ENCODE measurements at regions of chr1 and their contacts with region 1.

Region 1: GRCh38 chr1:223748773-223749733 is 36.7 kb downstream of the CAPN2 start:
- DNase-seq: peak; percentile 46 to 83 (median 66)
- ATAC-seq: peak; percentile 91
- H3K4me3 ChIP-seq: peak overlapping the region; percentile 55 to 58
- H3K4me3 Mint-ChIP-seq: peak overlapping the region; percentile 86
- H3K27ac ChIP-seq: peak overlapping the region in 1 of 2 experiments; percentile 36
- H3K27ac Mint-ChIP-seq: no peak overlapping the region
- H3K4me1 ChIP-seq: peaks cover 4% of the 10 kb centered on the region
- H3K4me1 Mint-ChIP-seq: no peaks in the 10 kb centered on the region
- H3K27me3 ChIP-seq: no peaks in the 10 kb centered on the region
- H3K27me3 Mint-ChIP-seq: no peaks in the 10 kb centered on the region
- CTCF ChIP-seq: peak; percentile 88

Region 2: GRCh38 chr1:223700942-223701637 is 48.0 kb before region 1 on chr1:
- CTCF ChIA-PET with region 1: interaction called, 135 read pairs
- POLR2A ChIA-PET with region 1: interaction called, 3 read pairs
- intact Hi-C with region 1: loop called (anchors 1 kb)
- DNase-seq: no peak
- ATAC-seq: no peak
- H3K4me3 ChIP-seq: no peak overlapping the region
- H3K4me3 Mint-ChIP-seq: no peak overlapping the region
- H3K27ac ChIP-seq: no peak overlapping the region
- H3K27ac Mint-ChIP-seq: no peak overlapping the region
- H3K4me1 ChIP-seq: peaks cover 7% of the 10 kb centered on the region
- H3K4me1 Mint-ChIP-seq: peaks cover 6% of the 10 kb centered on the region
- H3K27me3 ChIP-seq: no peaks in the 10 kb centered on the region
- H3K27me3 Mint-ChIP-seq: no peaks in the 10 kb centered on the region
- CTCF ChIP-seq: no peak

Region 3: DNA sequence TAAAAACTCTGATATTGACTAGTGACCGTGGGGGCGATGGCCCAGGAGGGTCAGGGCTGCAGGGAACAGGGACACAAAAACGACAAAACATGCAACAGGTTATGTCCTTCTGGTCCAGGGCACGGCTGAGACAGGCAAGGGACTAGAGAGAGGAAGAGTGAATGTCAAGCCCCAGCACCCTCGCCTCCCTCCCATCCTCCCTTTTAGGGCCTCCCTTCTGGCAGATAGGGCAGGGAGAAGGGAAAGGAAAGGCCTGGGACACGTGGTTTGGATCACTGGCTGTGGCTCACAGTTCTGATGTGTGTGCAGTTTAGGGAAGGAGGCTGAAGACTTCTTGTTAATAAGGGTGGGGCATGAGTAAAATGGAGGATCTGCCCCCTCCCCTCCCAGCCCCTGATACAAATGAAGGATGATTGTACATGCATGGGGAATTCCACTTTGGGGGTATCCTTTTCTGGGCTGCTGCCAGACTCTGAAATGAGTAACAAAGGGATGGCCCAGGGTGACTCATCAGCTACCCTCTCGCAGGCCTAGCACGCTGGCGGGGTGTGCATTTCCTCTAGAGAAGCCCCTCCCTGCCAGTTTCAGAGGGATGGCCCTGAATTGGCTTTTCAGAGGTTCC is 22.6 kb before region 1 on chr1:
- CTCF ChIA-PET with region 1: interaction called, 89 read pairs
- POLR2A ChIA-PET with region 1: interaction called, 3 read pairs
- intact Hi-C with region 1: loop called in 1 of 2 experiments (anchors 1 kb)
- DNase-seq: peak; percentile 59 to 96 (median 85)
- ATAC-seq: peak; percentile 95
- H3K4me3 ChIP-seq: no peak overlapping the region
- H3K4me3 Mint-ChIP-seq: peak overlapping the region; percentile 70
- H3K27ac ChIP-seq: peak overlapping the region; percentile 21 to 92
- H3K27ac Mint-ChIP-seq: peak overlapping the region; percentile 88
- H3K4me1 ChIP-seq: peaks cover 35% of the 10 kb centered on the region
- H3K4me1 Mint-ChIP-seq: peaks cover 58% of the 10 kb centered on the region
- H3K27me3 ChIP-seq: no peaks in the 10 kb centered on the region
- H3K27me3 Mint-ChIP-seq: no peaks in the 10 kb centered on the region
- CTCF ChIP-seq: no peak

Region 4: DNA sequence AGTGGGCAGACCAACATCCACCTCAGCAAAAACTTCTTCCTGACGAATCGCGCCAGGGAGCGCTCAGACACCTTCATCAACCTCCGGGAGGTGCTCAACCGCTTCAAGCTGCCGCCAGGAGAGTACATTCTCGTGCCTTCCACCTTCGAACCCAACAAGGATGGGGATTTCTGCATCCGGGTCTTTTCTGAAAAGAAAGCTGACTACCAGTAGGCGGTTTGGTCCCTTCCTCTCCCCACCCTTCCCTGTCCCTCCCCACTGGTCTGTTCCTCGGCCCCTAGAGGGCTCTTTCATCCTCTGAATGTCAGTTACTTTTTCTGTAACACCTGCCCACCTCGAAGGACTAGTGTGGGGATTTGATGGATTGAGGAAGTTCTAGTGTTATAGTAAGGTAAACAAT is 10.2 kb after region 1 on chr1:
- CTCF ChIA-PET with region 1: interaction called, 17 read pairs
- POLR2A ChIA-PET with region 1: interaction called, 3 read pairs
- intact Hi-C with region 1: no loop called
- DNase-seq: no peak
- ATAC-seq: no peak
- H3K4me3 ChIP-seq: no peak overlapping the region
- H3K4me3 Mint-ChIP-seq: no peak overlapping the region
- H3K27ac ChIP-seq: no peak overlapping the region
- H3K27ac Mint-ChIP-seq: no peak overlapping the region
- H3K4me1 ChIP-seq: no peaks in the 10 kb centered on the region
- H3K4me1 Mint-ChIP-seq: no peaks in the 10 kb centered on the region
- H3K27me3 ChIP-seq: no peaks in the 10 kb centered on the region
- H3K27me3 Mint-ChIP-seq: no peaks in the 10 kb centered on the region
- CTCF ChIP-seq: no peak

Region 5: GRCh38 chr1:224317383-224318024 is 568.5 kb after region 1 on chr1:
- CTCF ChIA-PET with region 1: no interaction called
- POLR2A ChIA-PET with region 1: no interaction called
- intact Hi-C with region 1: no loop called
- DNase-seq: no peak
- ATAC-seq: no peak
- H3K4me3 ChIP-seq: no peak overlapping the region
- H3K4me3 Mint-ChIP-seq: no peak overlapping the region
- H3K27ac ChIP-seq: no peak overlapping the region
- H3K27ac Mint-ChIP-seq: no peak overlapping the region
- H3K4me1 ChIP-seq: no peaks in the 10 kb centered on the region
- H3K4me1 Mint-ChIP-seq: peaks cover 10% of the 10 kb centered on the region
- H3K27me3 ChIP-seq: no peaks in the 10 kb centered on the region
- H3K27me3 Mint-ChIP-seq: no peaks in the 10 kb centered on the region
- CTCF ChIP-seq: no peak